HAP-1 (cell line): ENCODE measurements at regions of chr7 and their contacts with region 1.

Region 1: GRCh38 chr7:37916673-37917660 is at the start of gene SFRP4:
- DNase-seq: peak; percentile 56 to 59
- H3K4me3 ChIP-seq: no peak within 1 kb of the TSS
- H3K4me1 ChIP-seq: no peaks in the 10 kb centered on the region
- H3K27me3 ChIP-seq: peaks cover 21% of the 10 kb centered on the region

Region 2: GRCh38 chr7:38369816-38370493 is 453.0 kb after region 1 on chr7:
- in situ Hi-C with region 1: loop called (anchors 25 kb)
- DNase-seq: peak; percentile 79 to 95
- H3K4me3 ChIP-seq: no peak overlapping the region
- H3K4me1 ChIP-seq: no peaks in the 10 kb centered on the region
- H3K27me3 ChIP-seq: no peaks in the 10 kb centered on the region